A549 (cell line): ENCODE measurements at regions of chr16 and their contacts with region 1.

Region 1: DNA sequence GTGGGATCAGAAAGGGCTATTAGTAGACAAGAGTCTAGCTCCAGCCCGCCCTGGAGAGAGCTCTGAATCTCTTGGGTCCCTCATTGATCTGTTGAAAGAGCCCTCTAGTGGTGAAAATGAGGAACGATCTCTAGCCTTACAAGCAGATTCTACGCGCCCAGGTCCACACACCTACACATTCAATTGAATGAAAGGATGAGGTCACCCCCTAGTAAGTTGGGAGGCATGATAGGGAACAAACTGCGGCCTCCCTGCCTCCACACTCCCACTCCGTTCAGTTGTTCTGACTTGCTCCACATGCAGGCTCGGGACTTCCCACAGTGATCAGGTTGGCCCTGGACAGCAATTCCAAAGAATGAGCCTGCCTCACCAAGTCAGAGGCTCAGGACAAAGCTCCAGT is 2.9 kb upstream of the CACNG3 start:
- DNase-seq: peak; percentile 45 to 65
- ATAC-seq: peak; percentile 80 to 92; a peak in 5 of 6 replicates
- H3K4me3 ChIP-seq: no peak overlapping the region
- H3K27ac ChIP-seq: no peak overlapping the region
- H3K4me1 ChIP-seq: no peaks in the 10 kb centered on the region
- CTCF ChIP-seq: peak; percentile 61
- EP300 ChIP-seq: no peak
- POLR2A ChIP-seq: no peak
- RAD21 ChIP-seq: peak; percentile 24 to 43; a peak in 2 of 5 replicates

Region 2: GRCh38 chr16:24070851-24071250 is 182.3 kb before region 1 on chr16:
- CTCF ChIA-PET with region 1: interaction called, 10 read pairs
- POLR2A ChIA-PET with region 1: no interaction called
- DNase-seq: peak; percentile 51 to 65
- ATAC-seq: peak; percentile 80 to 92; a peak in 5 of 6 replicates
- H3K4me3 ChIP-seq: no peak overlapping the region
- H3K27ac ChIP-seq: no peak overlapping the region
- H3K4me1 ChIP-seq: no peaks in the 10 kb centered on the region
- CTCF ChIP-seq: peak; percentile 40
- EP300 ChIP-seq: no peak
- POLR2A ChIP-seq: no peak
- RAD21 ChIP-seq: peak; percentile 37 to 56; a peak in 4 of 5 replicates

Region 3: DNA sequence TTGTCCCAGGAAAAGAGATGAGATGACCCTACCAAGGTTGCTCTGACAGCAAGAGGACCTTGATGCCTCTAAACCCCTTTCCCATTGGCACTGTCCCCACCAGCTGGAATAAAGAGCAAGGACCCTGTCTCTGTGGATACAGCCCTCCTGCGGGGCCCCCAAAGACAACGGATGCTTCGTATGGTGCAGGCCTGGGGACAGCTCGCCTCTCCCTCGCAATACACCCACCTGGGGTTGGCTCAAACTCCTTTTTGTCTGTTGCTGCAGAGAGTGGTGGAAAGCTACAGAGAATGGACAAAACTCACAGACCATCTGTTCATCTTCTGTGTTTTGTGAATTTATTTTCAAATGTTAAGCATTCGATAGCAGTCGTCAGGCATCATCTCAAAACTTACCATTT is 24.7 kb before region 1 on chr16:
- CTCF ChIA-PET with region 1: interaction called, 19 read pairs
- POLR2A ChIA-PET with region 1: no interaction called
- DNase-seq: no peak
- ATAC-seq: no peak
- H3K4me3 ChIP-seq: no peak overlapping the region
- H3K27ac ChIP-seq: no peak overlapping the region
- H3K4me1 ChIP-seq: no peaks in the 10 kb centered on the region
- CTCF ChIP-seq: no peak
- EP300 ChIP-seq: no peak
- POLR2A ChIP-seq: no peak
- RAD21 ChIP-seq: no peak

Region 4: DNA sequence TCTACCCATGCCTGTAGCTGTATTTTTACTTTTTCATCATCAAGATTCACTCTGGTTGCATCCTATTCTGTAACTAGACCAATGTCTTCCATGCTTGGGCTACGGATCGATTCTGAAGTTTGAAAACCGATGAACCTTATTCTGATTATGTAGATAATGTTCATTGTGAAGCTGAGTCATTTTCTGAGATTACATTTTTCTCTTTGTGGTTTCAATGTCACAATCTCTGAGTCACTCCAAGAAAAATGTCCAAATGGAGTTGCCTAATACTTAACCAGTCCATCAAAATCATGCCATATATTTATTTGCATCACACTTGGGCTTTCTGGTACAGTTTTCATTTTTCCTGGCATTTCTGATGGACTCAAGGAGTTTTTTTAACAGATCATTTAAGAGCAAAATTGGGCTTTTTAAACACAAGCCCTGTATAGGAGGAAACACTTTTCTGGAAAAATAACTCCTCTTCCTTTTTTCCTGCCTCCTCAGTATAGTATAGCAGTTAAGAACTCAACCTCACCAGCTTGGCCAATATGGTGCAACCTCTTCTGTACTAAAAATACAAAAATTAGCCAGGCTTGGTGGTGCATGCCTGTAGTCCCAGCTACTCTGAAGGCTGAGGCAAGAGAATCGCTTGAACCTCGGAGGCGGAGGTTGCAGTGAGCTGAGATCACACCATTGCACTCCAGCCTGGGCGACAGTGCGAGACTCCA is 20.4 kb after region 1 on chr16:
- CTCF ChIA-PET with region 1: interaction called, 67 read pairs
- POLR2A ChIA-PET with region 1: no interaction called
- DNase-seq: peak; percentile 10
- ATAC-seq: peak in 1 of 2 experiments; percentile 85; a peak in 2 of 6 replicates
- H3K4me3 ChIP-seq: no peak overlapping the region
- H3K27ac ChIP-seq: no peak overlapping the region; a peak in 1 of 6 replicates
- H3K4me1 ChIP-seq: peaks cover 11% of the 10 kb centered on the region; the same call in 2 of the 3 replicates
- CTCF ChIP-seq: no peak
- EP300 ChIP-seq: no peak
- POLR2A ChIP-seq: no peak
- RAD21 ChIP-seq: no peak

Region 5: GRCh38 chr16:24499193-24499814 is 246.1 kb after region 1 on chr16:
- CTCF ChIA-PET with region 1: interaction called, 17 read pairs
- POLR2A ChIA-PET with region 1: no interaction called
- DNase-seq: peak; percentile 50 to 57
- ATAC-seq: peak; percentile 91 to 92
- H3K4me3 ChIP-seq: no peak overlapping the region
- H3K27ac ChIP-seq: no peak overlapping the region
- H3K4me1 ChIP-seq: no peaks in the 10 kb centered on the region
- CTCF ChIP-seq: peak; percentile 49
- EP300 ChIP-seq: no peak
- POLR2A ChIP-seq: no peak
- RAD21 ChIP-seq: peak; percentile 70 to 86